Sigmoid colon (tissue), 7 donors: ENCODE measurements at regions of chr20 and their contacts with region 1.

Region 1: GRCh38 chr20:50308513-50309279 is 118.1 kb downstream of the CEBPB start:
- DNase-seq: peak; percentile 99
- H3K4me3 ChIP-seq: peak overlapping the region in 3 of 4 donors; percentile 4 to 25 (median 11)
- H3K27ac ChIP-seq: peak overlapping the region; percentile 82 to 98 (median 92)
- H3K4me1 ChIP-seq: peaks cover 4 to 82% (median 79%) of the 10 kb centered on the region in 4 donors
- H3K27me3 ChIP-seq: no peaks in the 10 kb centered on the region
- CTCF ChIP-seq: no peak
- EP300 ChIP-seq: peak in 3 of 4 donors; percentile 35 to 79 (median 77)
- POLR2A ChIP-seq: peak; percentile 50 to 73

Region 2: DNA sequence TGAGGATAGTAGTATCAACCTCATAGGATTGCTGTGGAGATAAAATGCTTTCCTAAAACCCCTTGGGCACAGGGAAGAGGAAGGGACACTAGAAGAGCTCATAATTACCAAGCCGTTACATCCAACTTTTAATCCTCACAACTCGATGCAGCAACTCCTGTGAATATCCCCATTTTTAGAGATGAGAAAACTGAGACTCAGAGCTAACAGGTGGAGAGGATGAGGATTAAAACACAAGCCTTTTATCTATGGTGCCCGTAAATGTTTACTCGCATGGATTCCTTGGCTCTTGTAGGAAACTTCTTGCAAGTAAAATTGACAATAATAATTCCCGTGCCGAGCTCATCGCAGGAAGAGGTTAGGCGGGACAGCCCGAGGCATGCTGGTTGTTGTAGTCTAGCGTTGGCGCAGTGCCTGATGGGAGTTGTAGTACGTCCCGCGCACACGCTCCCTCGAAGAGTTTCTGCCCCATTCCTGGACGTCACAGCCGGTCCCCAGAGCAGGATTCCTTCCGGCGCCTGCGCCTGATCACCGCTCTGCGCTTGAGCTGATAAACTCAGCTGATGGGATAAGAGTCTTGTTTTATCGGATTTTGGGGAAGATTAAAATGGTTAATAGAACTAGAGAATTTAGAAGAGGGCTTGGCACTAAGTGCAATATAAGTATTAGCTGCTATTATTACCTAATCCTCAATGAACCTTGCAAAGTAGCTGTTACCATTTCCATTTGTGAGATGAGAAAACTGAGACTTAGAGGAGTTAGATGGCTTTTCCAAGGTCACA is 192.9 kb before region 1 on chr20:
- intact Hi-C with region 1: loop called (anchors 10 kb)
- DNase-seq: peak; percentile 99
- H3K4me3 ChIP-seq: peak overlapping the region; percentile 29 to 55 (median 50)
- H3K27ac ChIP-seq: peak overlapping the region; percentile 81 to 99 (median 91)
- H3K4me1 ChIP-seq: peaks cover 0 to 43% (median 36%) of the 10 kb centered on the region in 4 donors
- H3K27me3 ChIP-seq: no peaks in the 10 kb centered on the region
- CTCF ChIP-seq: no peak
- EP300 ChIP-seq: peak in 1 of 4 donors; percentile 53
- POLR2A ChIP-seq: no peak

Region 3: GRCh38 chr20:50379049-50379990 is 70.6 kb after region 1 on chr20:
- intact Hi-C with region 1: loop called (anchors 1 kb)
- DNase-seq: peak; percentile 98
- H3K4me3 ChIP-seq: peak overlapping the region in 2 of 4 donors; percentile 17 to 21
- H3K27ac ChIP-seq: peak overlapping the region; percentile 75 to 83 (median 78)
- H3K4me1 ChIP-seq: peaks cover 0 to 54% (median 49%) of the 10 kb centered on the region in 4 donors
- H3K27me3 ChIP-seq: no peaks in the 10 kb centered on the region
- CTCF ChIP-seq: no peak
- EP300 ChIP-seq: peak in 3 of 4 donors; percentile 9 to 75 (median 63)
- POLR2A ChIP-seq: peak; percentile 60 to 71

Region 4: DNA sequence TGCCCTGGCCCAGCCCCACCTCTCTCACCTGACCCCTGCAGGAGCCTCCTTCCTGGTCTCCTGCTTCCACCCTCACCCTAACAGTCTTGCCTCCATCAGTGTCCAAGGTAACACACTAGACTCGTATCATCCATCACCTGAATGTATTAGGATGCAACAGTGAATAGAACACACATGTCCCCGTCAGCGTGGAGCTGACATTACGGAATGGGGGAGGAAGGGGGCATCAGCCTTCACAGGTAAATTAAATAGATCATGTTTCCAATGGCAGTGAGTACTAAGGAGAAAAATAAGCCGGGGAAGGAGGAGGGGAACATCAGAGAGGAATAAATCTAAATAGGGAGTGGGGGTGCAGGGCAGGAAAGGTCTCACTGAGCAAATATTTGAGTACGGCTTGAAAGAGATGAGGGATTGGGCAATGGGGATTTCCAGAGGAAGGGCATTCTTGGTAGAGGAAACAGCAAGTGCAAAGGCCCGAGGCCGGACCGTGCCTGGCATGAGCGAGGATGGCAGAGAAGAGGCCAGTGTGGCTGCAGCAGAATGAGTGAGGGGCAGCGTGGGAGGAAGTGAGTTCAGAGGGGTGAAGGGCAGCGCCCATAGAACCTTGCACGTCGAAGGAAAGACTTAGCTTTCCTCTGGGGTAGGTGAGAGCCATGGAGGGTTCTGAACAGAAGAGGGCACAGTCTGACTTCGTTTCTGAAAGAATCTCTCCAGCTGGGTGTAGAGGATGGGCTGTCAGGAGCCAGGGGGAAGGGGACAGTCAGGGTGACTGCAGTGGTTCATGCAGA is 91.4 kb after region 1 on chr20:
- intact Hi-C with region 1: loop called (anchors 1 kb)
- DNase-seq: no peak
- H3K4me3 ChIP-seq: no peak overlapping the region
- H3K27ac ChIP-seq: peak overlapping the region; percentile 71 to 87 (median 77)
- H3K4me1 ChIP-seq: peaks cover 0 to 59% (median 52%) of the 10 kb centered on the region in 4 donors
- H3K27me3 ChIP-seq: no peaks in the 10 kb centered on the region
- CTCF ChIP-seq: no peak
- EP300 ChIP-seq: no peak
- POLR2A ChIP-seq: no peak

Region 5: GRCh38 chr20:50415516-50416113 is 106.9 kb after region 1 on chr20:
- intact Hi-C with region 1: loop called (anchors 1 kb)
- DNase-seq: peak; percentile 100
- H3K4me3 ChIP-seq: peak overlapping the region in 1 of 4 donors; percentile 3
- H3K27ac ChIP-seq: peak overlapping the region; percentile 91 to 100 (median 96)
- H3K4me1 ChIP-seq: peaks cover 0 to 35% (median 27%) of the 10 kb centered on the region in 4 donors
- H3K27me3 ChIP-seq: no peaks in the 10 kb centered on the region
- CTCF ChIP-seq: no peak
- EP300 ChIP-seq: peak; percentile 99 to 100 (median 100)
- POLR2A ChIP-seq: peak; percentile 55 to 62

Region 6: DNA sequence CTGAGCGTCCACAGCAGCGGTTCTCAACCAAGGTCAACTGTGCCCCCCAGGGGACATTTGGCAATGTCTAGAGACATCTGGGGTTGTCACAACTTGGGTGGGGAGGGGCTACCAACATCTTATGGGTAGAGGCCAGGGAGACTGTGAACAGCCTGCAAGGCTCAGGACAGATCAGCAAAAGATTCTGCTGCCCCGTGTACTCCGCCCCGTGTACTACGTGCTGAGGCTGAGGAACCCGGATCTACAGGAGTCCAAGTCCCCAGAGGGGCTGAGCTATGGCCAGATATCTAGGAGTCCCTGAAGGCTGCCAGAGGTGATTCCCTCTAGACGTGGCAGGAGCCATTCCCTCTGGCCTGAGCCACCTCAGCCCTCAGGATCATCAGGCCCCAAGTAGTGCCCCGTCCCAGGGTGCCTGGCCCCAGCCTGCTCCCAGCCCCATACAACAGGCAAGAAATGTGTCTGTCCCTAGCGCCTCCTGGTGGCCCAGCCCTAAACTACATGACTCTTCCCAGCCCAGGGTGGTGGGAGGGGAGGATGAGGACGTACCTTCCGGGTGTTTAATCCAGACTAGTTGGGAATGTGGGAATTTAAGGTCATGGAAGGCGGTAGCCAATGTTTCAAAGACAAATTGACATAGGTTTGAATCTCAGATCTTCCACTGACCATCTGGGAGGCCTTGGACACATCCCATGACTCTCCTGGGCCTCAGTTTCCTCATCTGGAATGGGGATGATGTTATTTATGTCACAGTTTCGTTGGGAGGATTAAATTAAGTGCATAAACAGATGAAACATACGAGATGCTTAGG is 152.0 kb after region 1 on chr20:
- intact Hi-C with region 1: loop called (anchors 5 kb)
- DNase-seq: peak; percentile 95
- H3K4me3 ChIP-seq: no peak overlapping the region
- H3K27ac ChIP-seq: peak overlapping the region; percentile 35 to 70 (median 43)
- H3K4me1 ChIP-seq: peaks cover 0 to 22% (median 14%) of the 10 kb centered on the region in 4 donors
- H3K27me3 ChIP-seq: no peaks in the 10 kb centered on the region
- CTCF ChIP-seq: peak; percentile 90 to 98 (median 97)
- EP300 ChIP-seq: no peak
- POLR2A ChIP-seq: no peak